ENCODE measurements at regions of chr12 and their contacts with region 1.

Region 1: DNA sequence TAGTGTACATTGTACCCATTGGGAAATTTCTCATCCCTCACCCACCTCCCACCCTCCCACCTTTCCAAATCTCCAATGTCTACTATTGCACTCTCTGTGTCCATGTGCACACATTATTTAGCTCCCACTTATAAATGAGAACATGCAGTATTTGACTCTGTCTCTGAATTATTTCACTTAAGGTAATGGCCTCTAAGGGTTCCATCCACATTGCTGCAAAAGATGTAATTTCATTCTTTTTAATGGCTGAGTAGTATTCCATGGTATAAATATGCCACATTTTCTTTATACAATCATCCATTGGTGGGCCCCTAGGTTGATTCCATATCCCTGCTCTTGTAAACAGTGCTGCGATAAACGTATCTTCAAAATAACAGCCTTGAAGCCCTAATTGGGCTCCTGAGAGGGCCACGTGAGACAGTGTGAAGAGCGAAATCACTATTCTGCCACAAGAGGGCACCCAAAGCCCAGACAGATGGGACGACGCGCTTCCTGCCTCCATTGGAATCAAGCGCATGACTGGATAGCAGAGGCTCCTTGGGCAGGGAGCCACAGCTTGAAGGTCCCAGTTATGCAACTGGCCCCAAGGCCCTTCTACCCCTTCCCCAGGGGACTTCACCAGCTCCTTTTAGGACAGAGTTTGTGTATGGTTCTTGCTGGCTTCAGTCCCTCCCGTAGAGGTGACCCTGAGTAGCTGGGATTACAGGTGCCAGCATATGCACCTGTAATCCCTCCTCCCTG is 21.3 kb upstream of the CD27 start:
- DNase-seq: peak; percentile 90
- H3K4me3 ChIP-seq: peak overlapping the region in 1 of 8 donors; percentile 20
- H3K27ac ChIP-seq: peak overlapping the region in 4 of 8 donors; percentile 42 to 88 (median 64)
- H3K4me1 ChIP-seq: peaks cover 4 to 61% (median 40%) of the 10 kb centered on the region in 6 donors
- H3K27me3 ChIP-seq: no peaks in the 10 kb centered on the region
- CTCF ChIP-seq: peak; percentile 89 to 98 (median 92)
- POLR2A ChIP-seq: no peak

Region 2: DNA sequence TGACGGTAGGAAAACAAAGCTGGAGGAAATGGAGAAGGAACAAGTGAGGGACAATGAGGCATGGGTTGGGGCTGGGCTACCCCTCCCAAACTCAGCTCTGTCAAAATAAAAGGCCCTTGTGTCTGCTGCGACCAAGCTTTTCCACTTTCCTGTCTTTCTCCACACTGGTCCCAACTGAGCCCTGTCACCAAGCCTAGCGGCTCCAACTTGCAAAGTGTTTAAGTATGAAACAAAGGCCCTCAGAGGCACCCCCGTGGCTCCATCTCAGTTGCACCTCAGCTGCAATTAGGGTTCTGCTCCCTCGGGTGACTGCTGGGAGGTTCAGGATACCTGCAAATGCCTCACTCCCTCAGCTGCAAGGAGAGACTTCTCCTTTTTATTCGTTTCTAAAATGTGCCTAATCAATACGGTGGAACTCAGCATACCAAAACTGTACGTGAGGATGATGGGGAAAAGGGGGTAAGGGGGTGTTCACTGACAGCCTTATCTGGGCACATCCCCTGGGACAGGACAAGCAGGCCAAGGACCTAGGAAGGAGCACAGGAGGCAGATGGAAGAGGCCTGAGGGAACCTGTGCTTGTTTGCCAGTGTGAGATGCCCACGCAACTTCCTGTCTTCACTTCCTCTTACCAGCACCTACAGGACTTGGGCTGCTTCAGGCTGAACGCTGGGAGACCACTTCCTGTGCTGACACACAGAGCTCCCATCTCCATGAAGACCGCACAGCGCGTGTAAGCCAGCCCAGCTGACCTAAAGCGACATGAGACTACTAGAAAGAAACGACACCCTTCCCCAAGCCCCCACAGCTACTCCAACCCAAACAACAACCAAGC is 38.2 kb after region 1 on chr12:
- intact Hi-C with region 1: loop called (anchors 5 kb)
- DNase-seq: peak; percentile 96
- H3K4me3 ChIP-seq: peak overlapping the region in 2 of 8 donors; percentile 6 to 55
- H3K27ac ChIP-seq: peak overlapping the region; percentile 46 to 94 (median 89)
- H3K4me1 ChIP-seq: peaks cover 55 to 100% (median 80%) of the 10 kb centered on the region in 6 donors
- H3K27me3 ChIP-seq: no peaks in the 10 kb centered on the region
- CTCF ChIP-seq: no peak
- POLR2A ChIP-seq: peak in 1 of 3 donors; percentile 41

Region 3: DNA sequence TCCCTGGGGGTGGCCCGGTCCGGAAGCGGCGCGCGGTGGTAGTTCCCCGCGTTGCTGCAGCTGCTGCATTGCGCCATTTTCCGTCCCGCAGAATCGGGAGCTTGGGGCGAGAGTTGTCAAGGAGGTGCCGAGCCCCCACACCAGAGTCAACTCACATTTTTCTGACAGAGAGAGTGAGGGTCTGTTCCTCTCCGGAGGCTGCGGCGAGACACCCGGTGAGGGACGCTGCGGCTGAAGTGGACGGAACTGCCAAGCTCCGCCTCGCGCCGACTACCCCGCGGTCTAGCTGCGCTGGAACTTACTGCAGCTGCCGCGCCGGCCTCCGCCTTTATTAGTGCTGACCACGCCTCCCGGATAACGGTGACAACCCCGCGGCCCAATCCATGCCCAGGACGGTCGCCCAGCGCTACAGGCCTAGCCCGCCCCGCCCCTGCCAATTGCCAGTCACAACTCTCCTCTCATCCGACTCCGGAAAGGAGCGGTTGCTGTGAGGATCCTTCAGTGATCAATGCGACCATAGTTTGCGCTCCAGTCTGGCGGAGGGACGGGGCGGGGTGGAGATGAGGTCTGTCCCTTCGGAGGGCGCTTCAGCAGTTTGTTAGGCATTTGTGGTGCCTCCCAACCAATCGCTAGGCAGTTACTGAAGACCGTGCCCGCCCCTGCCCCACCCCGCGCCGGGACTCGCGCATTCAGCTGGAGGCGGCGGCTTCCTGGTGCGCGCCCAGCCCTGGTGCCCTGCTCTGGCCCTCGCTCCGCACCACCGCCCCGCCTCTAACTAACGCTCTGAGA is 47.1 kb after region 1 on chr12 and contains the start of gene VAMP1:
- intact Hi-C with region 1: loop called (anchors 5 kb)
- DNase-seq: peak; percentile 99
- H3K4me3 ChIP-seq: peak within 1 kb of the TSS; percentile 64 to 94 (median 79)
- H3K27ac ChIP-seq: peak within 1 kb of the TSS; percentile 89 to 97 (median 91)
- H3K4me1 ChIP-seq: peaks cover 27 to 59% (median 52%) of the 10 kb centered on the region in 6 donors
- H3K27me3 ChIP-seq: no peaks in the 10 kb centered on the region
- CTCF ChIP-seq: peak in 8 of 11 experiments; percentile 14 to 56 (median 26)
- POLR2A ChIP-seq: peak; percentile 96 to 100 (median 98)
- total RNA-seq, gene VAMP1: 18.5 to 32.5 (median 24.2) TPM

Region 4: DNA sequence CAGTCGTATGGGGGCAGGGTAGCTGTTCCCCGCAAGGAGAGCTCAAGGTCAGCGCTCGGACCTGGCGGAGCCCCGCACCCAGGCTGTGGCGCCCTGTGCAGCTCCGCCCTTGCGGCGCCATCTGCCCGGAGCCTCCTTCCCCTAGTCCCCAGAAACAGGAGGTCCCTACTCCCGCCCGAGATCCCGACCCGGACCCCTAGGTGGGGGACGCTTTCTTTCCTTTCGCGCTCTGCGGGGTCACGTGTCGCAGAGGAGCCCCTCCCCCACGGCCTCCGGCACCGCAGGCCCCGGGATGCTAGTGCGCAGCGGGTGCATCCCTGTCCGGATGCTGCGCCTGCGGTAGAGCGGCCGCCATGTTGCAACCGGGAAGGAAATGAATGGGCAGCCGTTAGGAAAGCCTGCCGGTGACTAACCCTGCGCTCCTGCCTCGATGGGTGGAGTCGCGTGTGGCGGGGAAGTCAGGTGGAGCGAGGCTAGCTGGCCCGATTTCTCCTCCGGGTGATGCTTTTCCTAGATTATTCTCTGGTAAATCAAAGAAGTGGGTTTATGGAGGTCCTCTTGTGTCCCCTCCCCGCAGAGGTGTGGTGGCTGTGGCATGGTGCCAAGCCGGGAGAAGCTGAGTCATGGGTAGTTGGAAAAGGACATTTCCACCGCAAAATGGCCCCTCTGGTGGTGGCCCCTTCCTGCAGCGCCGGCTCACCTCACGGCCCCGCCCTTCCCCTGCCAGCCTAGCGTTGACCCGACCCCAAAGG is 111.7 kb after region 1 on chr12:
- intact Hi-C with region 1: loop called (anchors 5 kb)
- DNase-seq: peak; percentile 95
- H3K4me3 ChIP-seq: peak overlapping the region; percentile 92 to 99 (median 96)
- H3K27ac ChIP-seq: peak overlapping the region; percentile 95 to 99 (median 98)
- H3K4me1 ChIP-seq: peaks cover 51 to 78% (median 70%) of the 10 kb centered on the region in 6 donors
- H3K27me3 ChIP-seq: no peaks in the 10 kb centered on the region
- CTCF ChIP-seq: peak in 3 of 11 experiments; percentile 12 to 24 (median 19)
- POLR2A ChIP-seq: peak in 2 of 3 donors; percentile 17 to 54